Natural killer cell (primary cell): ENCODE measurements at regions of chrX and their contacts with region 1.

Region 1: GRCh38 chrX:130079824-130080406 is 30.4 kb downstream of the ELF4 start:
- DNase-seq: peak in 1 of 2 donors; percentile 83
- ATAC-seq: no peak
- H3K4me3 ChIP-seq: no peak overlapping the region
- H3K4me3 Mint-ChIP-seq: peak overlapping the region; percentile 78
- H3K27ac ChIP-seq: peak overlapping the region; percentile 89
- H3K27ac Mint-ChIP-seq: peak overlapping the region; percentile 84 to 88
- H3K4me1 ChIP-seq: peaks cover 54% of the 10 kb centered on the region
- H3K4me1 Mint-ChIP-seq: peaks cover 39 to 43% of the 10 kb centered on the region in 2 donors
- H3K27me3 ChIP-seq: no peaks in the 10 kb centered on the region
- H3K27me3 Mint-ChIP-seq: no peaks in the 10 kb centered on the region
- CTCF ChIP-seq: peak; percentile 58

Region 2: GRCh38 chrX:129900054-129900453 is 179.9 kb before region 1 on chrX:
- intact Hi-C with region 1: no loop called
- DNase-seq: no peak
- ATAC-seq: no peak
- H3K4me3 ChIP-seq: no peak overlapping the region
- H3K4me3 Mint-ChIP-seq: no peak overlapping the region
- H3K27ac ChIP-seq: no peak overlapping the region
- H3K27ac Mint-ChIP-seq: no peak overlapping the region
- H3K4me1 ChIP-seq: no peaks in the 10 kb centered on the region
- H3K4me1 Mint-ChIP-seq: no peaks in the 10 kb centered on the region
- H3K27me3 ChIP-seq: no peaks in the 10 kb centered on the region
- H3K27me3 Mint-ChIP-seq: no peaks in the 10 kb centered on the region
- CTCF ChIP-seq: no peak

Region 3: GRCh38 chrX:130039847-130040246 is 40.1 kb before region 1 on chrX:
- intact Hi-C with region 1: no loop called
- DNase-seq: no peak
- ATAC-seq: no peak
- H3K4me3 ChIP-seq: no peak overlapping the region
- H3K4me3 Mint-ChIP-seq: no peak overlapping the region
- H3K27ac ChIP-seq: no peak overlapping the region
- H3K27ac Mint-ChIP-seq: no peak overlapping the region
- H3K4me1 ChIP-seq: no peaks in the 10 kb centered on the region
- H3K4me1 Mint-ChIP-seq: no peaks in the 10 kb centered on the region
- H3K27me3 ChIP-seq: no peaks in the 10 kb centered on the region
- H3K27me3 Mint-ChIP-seq: no peaks in the 10 kb centered on the region
- CTCF ChIP-seq: no peak

Region 4: DNA sequence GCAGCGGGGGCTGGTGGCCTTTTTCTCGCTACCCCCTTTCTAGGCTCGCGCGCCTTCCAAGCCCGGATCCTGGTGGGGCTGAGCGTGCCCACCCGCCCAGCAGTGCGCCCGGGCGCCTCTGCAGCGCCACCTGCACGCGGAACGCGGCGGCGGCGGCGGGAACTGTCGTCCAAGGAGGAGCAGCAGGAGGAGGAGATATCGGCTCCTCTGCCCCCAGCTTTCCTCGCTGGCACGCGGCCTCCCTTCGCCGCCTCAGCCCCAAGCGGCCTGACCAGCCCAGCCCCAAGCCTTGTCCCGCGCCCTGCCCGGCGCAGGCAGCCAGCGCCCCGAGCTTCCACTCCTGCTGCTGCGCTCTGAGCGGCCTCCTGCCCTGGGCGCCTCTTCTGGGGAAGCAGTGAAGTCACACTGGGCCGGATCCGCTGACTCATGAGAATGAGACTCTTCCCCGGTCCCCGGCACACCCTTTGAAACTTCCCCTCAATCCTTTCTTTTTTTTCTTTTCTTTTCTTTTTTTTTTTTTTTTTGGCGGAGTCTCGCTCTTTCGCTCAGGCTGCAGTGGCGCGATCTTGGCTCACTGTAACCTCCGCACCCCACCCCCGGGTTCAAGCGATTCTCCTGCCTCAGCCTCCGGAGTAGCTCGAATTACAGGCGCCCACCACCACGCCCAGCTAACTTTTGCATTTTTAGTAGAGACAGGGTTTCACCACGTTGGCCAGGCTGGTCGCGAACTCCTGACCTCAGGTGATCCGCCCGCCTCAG is 41.0 kb after region 1 on chrX:
- intact Hi-C with region 1: loop called (anchors 1 kb)
- DNase-seq: peak; percentile 63 to 76
- ATAC-seq: peak; percentile 91 to 93 (median 93)
- H3K4me3 ChIP-seq: peak overlapping the region; percentile 38
- H3K4me3 Mint-ChIP-seq: peak overlapping the region; percentile 86
- H3K27ac ChIP-seq: no peak overlapping the region
- H3K27ac Mint-ChIP-seq: peak overlapping the region; percentile 36 to 74
- H3K4me1 ChIP-seq: peaks cover 29% of the 10 kb centered on the region
- H3K4me1 Mint-ChIP-seq: peaks cover 10 to 11% of the 10 kb centered on the region in 2 donors
- H3K27me3 ChIP-seq: no peaks in the 10 kb centered on the region
- H3K27me3 Mint-ChIP-seq: peaks cover 0 to 8% of the 10 kb centered on the region in 2 donors
- CTCF ChIP-seq: peak; percentile 76

Region 5: DNA sequence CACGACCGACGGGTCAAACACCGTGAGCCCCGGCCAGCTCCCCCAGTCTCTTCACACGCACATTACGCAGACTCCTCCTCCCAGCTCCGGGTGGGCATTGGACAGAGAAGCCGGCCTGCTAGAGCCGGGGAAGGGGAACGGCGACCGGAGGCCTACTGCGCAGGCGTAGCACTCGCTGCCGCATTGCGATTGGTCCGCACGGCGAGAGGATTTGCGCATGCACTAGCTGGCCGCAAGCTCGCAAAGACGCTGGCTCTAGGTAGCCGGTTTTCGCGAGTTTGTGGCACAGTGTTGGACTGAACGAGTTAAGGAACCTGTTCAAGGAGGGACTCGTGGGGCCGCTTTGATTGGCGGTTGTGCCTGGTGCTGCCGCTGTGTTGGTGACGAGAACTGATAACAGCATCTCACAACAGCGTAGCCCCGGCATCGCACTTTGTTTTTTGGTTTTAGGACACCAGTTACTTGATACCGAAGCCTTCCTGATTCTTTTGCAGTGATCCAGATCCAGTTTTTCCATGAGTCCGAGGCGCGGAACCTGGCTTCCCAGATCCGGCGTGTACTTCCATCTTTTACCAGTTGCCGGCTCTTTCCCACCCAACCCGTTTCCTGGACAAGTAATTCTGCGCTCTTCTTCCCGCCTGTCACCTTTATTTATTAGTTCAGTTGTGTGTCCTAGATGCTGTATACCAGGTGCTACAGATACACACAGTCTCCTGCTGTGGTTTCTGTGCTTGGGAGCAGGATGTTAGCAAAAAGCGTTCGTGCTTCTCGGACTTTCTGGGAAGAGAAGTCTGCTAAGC is 86.0 kb after region 1 on chrX and contains the start of gene AIFM1:
- intact Hi-C with region 1: loop called (anchors 5 kb)
- DNase-seq: peak; percentile 82 to 94
- ATAC-seq: peak; percentile 86 to 94 (median 88)
- H3K4me3 ChIP-seq: peak within 1 kb of the TSS; percentile 71
- H3K4me3 Mint-ChIP-seq: peak within 1 kb of the TSS; percentile 88
- H3K27ac ChIP-seq: peak within 1 kb of the TSS; percentile 91
- H3K27ac Mint-ChIP-seq: peak within 1 kb of the TSS; percentile 90 to 91
- H3K4me1 ChIP-seq: peaks cover 11% of the 10 kb centered on the region
- H3K4me1 Mint-ChIP-seq: peaks cover 17 to 29% of the 10 kb centered on the region in 2 donors
- H3K27me3 ChIP-seq: no peaks in the 10 kb centered on the region
- H3K27me3 Mint-ChIP-seq: peaks cover 0 to 15% of the 10 kb centered on the region in 2 donors
- CTCF ChIP-seq: no peak
- total RNA-seq, gene AIFM1: 16.2 to 21.1 (median 17.0) TPM

Region 6: DNA sequence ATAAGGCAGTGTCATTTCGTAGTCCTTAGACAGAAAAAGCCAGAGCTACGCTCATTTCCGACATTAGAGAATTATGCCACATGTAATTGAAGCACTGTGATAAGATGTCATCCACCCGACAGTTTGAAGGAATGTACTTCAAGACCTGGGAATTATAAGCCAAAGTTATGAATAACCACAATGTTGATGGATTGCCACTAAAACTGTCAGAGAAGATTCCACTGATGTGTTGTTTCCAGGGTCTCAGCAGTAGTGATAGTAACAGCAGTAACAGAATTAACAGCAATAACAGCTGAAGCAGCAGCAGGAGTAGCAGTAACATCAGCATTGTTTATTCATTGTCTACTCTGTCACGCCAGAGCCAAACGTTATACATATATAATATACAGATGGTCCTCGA is 116.6 kb after region 1 on chrX:
- intact Hi-C with region 1: loop called (anchors 1 kb)
- DNase-seq: no peak
- ATAC-seq: no peak
- H3K4me3 ChIP-seq: no peak overlapping the region
- H3K4me3 Mint-ChIP-seq: no peak overlapping the region
- H3K27ac ChIP-seq: no peak overlapping the region
- H3K27ac Mint-ChIP-seq: no peak overlapping the region
- H3K4me1 ChIP-seq: no peaks in the 10 kb centered on the region
- H3K4me1 Mint-ChIP-seq: no peaks in the 10 kb centered on the region
- H3K27me3 ChIP-seq: no peaks in the 10 kb centered on the region
- H3K27me3 Mint-ChIP-seq: peaks cover 0 to 5% of the 10 kb centered on the region in 2 donors
- CTCF ChIP-seq: no peak

Region 7: DNA sequence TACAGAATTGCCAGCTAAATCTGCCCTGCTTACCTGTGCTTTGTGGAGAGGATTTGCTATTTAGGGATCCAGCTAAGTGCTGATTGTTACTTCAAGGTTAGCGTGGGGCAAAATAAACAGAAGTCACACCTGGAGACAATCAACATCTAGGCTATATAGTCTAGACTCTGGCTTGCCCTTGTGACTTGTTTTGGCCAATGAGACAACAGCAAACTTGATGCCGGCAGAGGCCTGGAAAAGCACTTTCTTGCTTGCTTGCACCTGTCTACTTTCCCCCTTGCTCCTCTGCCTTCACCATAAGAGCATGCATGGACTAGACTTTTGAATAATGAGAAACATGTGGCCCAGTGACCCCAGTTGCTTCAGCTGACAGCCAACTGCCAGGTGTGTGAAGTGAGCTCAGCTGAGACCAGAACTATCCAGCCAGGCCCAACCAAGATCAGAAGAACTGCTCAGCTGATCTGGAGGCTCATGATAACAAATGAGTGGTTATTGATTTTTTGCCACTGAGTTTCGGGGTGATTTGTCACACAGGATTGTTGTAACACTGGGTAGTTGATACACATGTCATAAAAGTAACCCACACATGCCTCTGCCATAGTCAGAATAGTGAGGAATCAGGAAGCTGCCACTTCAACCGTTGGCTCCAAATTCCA is 486.2 kb after region 1 on chrX:
- intact Hi-C with region 1: no loop called
- DNase-seq: no peak
- ATAC-seq: no peak
- H3K4me3 ChIP-seq: no peak overlapping the region
- H3K4me3 Mint-ChIP-seq: no peak overlapping the region
- H3K27ac ChIP-seq: no peak overlapping the region
- H3K27ac Mint-ChIP-seq: no peak overlapping the region
- H3K4me1 ChIP-seq: no peaks in the 10 kb centered on the region
- H3K4me1 Mint-ChIP-seq: no peaks in the 10 kb centered on the region
- H3K27me3 ChIP-seq: no peaks in the 10 kb centered on the region
- H3K27me3 Mint-ChIP-seq: peaks cover 8 to 18% of the 10 kb centered on the region in 2 donors
- CTCF ChIP-seq: no peak